ENCODE measurements at regions of chr7 and their contacts with region 1.

Region 1: DNA sequence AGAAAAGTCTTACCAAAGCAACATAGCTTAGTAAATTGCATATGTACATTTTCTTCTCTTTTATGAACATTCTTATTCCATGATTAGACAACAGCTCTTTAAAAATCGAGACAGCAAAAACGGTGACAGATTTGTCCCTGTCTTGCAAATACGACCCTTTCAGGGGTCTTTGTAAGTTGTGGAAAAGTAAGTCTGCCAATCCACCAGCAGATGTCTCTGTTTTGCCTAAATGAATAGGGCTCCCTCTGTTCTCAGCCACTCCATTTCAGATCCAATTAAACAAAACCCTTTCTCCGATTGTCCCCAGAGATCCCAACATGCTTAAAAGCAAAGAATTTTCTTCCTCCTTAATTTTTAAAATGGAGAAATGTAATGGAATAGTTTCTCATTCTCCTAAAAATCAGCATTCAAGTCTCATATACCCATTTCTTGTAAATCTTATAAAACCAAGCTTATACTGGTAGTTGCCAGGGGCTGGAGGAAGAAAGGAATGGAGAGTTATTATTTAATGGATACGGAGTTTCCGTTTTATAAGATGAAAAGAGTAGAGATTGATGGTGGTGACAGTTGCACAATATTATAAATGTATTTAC is 61.0 kb upstream of the NFE2L3 start:
- DNase-seq: peak; percentile 44
- H3K4me3 ChIP-seq: no peak overlapping the region
- H3K27ac ChIP-seq: no peak overlapping the region
- H3K4me1 ChIP-seq: peaks cover 33% of the 10 kb centered on the region
- H3K27me3 ChIP-seq: no peaks in the 10 kb centered on the region
- CTCF ChIP-seq: peak; percentile 56 to 77

Region 2: GRCh38 chr7:25908154-25908949 is 182.7 kb before region 1 on chr7:
- CTCF ChIA-PET with region 1: no interaction called
- dilution Hi-C with region 1: no loop called
- in situ Hi-C with region 1: no loop called
- intact Hi-C with region 1: no loop called
- DNase-seq: no peak
- H3K4me3 ChIP-seq: no peak overlapping the region
- H3K27ac ChIP-seq: no peak overlapping the region
- H3K4me1 ChIP-seq: no peaks in the 10 kb centered on the region
- H3K27me3 ChIP-seq: no peaks in the 10 kb centered on the region
- CTCF ChIP-seq: no peak

Region 3: DNA sequence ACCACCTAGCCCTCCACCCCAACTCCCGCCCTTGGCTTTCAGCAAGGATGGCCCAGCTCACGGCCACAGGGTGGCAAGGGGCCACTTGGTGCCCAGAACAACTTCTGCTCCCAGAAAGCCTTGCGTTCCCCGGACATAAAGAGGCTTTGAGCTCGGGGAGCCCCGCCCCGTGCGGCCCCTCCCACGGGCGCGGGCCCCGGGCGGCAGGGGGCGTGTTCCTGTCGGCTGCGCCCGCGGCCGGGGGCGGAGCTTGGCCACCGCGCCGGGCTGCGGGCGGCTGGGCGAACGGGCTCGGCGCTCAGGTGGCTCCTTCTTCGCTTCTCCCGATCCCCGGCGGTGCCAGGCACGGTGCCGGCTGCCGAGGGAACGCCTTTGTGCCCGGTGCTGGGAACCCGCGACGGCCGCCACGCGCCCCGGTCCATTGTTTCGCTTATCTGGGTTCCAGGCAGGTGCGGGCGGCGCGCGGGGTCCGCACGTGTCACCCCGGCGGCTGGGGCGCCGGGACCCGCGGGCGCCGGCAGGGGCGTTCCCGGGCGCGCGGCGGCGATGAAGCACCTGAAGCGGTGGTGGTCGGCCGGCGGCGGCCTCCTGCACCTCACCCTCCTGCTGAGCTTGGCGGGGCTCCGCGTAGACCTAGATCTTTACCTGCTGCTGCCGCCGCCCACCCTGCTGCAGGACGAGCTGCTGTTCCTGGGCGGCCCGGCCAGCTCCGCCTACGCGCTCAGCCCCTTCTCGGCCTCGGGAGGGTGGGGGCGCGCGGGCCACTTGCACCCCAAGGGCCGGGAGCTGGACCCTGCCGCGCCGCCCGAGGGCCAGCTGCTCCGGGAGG is 61.1 kb after region 1 on chr7 and contains the start of gene NFE2L3:
- CTCF ChIA-PET with region 1: interaction called, 17 read pairs
- dilution Hi-C with region 1: no loop called
- in situ Hi-C with region 1: no loop called
- intact Hi-C with region 1: no loop called
- DNase-seq: peak; percentile 65
- H3K4me3 ChIP-seq: peak within 1 kb of the TSS; percentile 30 to 65 (median 64)
- H3K27ac ChIP-seq: peak within 1 kb of the TSS; percentile 29
- H3K4me1 ChIP-seq: peaks cover 45% of the 10 kb centered on the region
- H3K27me3 ChIP-seq: no peaks in the 10 kb centered on the region
- CTCF ChIP-seq: peak in 1 of 2 donors; percentile 2
- total RNA-seq, gene NFE2L3: 5.4 to 8.3 TPM

Region 4: DNA sequence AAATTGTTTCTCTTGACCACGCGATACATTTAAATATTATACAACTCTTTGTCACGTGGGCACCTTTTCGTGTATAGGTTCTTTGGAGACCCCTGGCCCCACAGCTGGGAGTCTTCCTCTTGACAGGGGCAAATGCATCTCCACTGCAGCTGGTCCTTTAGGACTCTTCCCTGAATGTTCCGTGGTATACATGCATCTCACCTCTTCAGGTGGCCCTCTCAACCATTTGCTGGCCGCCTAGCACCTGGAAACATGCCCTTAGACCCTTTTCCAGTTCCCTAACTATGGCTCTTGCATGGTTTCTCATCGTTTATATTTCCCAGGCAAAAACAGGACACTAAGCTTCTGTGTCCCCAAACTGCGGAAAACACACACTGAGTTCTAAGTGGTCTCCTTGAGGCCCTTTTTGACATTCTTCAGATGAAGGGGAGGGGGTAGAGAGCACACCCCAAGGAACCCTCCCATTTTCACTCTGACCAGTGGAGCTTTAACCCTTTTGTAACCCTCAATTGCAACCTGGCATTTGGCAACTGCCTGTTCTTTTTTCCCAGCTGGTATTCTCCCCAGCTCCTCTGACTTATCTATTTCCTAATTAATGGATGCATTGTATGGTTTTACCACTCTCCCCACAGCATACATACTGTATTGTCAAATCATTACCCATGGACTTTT is 88.9 kb after region 1 on chr7:
- CTCF ChIA-PET with region 1: interaction called, 13 read pairs
- dilution Hi-C with region 1: no loop called
- in situ Hi-C with region 1: no loop called
- intact Hi-C with region 1: no loop called
- DNase-seq: no peak
- H3K4me3 ChIP-seq: no peak overlapping the region
- H3K27ac ChIP-seq: no peak overlapping the region
- H3K4me1 ChIP-seq: no peaks in the 10 kb centered on the region
- H3K27me3 ChIP-seq: no peaks in the 10 kb centered on the region
- CTCF ChIP-seq: no peak

Region 5: GRCh38 chr7:26200444-26201246 is 109.6 kb after region 1 on chr7 and contains the start of gene HNRNPA2B1:
- CTCF ChIA-PET with region 1: interaction called, 4 read pairs
- dilution Hi-C with region 1: no loop called
- in situ Hi-C with region 1: loop called (anchors 5 to 10 kb)
- intact Hi-C with region 1: loop called (anchors 1 kb)
- DNase-seq: peak; percentile 97
- H3K4me3 ChIP-seq: peak within 1 kb of the TSS; percentile 99 to 100 (median 100)
- H3K27ac ChIP-seq: peak within 1 kb of the TSS; percentile 93
- H3K4me1 ChIP-seq: peaks cover 28% of the 10 kb centered on the region
- H3K27me3 ChIP-seq: no peaks in the 10 kb centered on the region
- CTCF ChIP-seq: no peak
- total RNA-seq, gene HNRNPA2B1: 62.0 to 506 TPM

Region 6: GRCh38 chr7:26284995-26285632 is 194.1 kb after region 1 on chr7:
- CTCF ChIA-PET with region 1: no interaction called
- dilution Hi-C with region 1: no loop called
- in situ Hi-C with region 1: no loop called
- intact Hi-C with region 1: loop called (anchors 5 kb)
- DNase-seq: peak; percentile 47
- H3K4me3 ChIP-seq: no peak overlapping the region
- H3K27ac ChIP-seq: no peak overlapping the region
- H3K4me1 ChIP-seq: no peaks in the 10 kb centered on the region
- H3K27me3 ChIP-seq: no peaks in the 10 kb centered on the region
- CTCF ChIP-seq: peak; percentile 5 to 17

Measured in mammary epithelial cell (primary cell).